ENCODE measurements at regions of chr9 and their contacts with region 1.

Region 1: DNA sequence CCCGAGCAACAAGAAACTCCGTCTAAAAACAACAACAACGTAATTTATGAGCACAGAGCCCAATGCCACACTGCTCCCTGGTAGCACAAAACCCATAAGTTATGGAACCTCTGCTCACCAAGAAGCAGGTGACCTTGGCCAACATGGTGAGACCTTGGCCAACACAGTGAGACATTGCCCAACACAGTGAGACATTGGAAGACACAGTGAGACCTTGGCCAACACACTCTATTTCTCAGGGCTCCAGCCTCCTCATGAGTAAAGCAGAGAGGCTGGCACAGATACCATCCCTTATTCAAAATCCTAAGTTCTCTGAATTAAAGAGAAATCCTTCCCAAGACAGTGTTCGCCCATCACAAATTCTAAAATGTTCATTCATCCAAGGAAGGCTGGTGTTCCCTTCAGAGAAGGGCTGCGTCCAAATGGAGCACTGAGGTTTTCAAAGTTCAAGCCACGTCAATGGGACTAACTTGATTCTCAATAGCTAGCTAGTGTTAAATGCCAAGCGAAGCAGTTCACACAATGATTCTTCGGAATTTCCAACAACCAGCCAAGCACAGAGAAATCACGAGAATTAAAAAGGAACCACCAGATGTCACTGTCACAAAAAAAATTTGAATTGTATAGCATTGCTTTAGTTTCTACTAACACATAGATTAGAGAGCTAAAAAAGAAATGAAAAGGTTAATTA is 29.5 kb downstream of the TTC39B start:
- DNase-seq: peak; percentile 15
- ATAC-seq: no peak
- H3K4me3 ChIP-seq: no peak overlapping the region
- H3K27ac ChIP-seq: no peak overlapping the region
- H3K4me1 ChIP-seq: peaks cover 71% of the 10 kb centered on the region
- H3K27me3 ChIP-seq: no peaks in the 10 kb centered on the region
- CTCF ChIP-seq: peak; percentile 40
- EP300 ChIP-seq: no peak
- POLR2A ChIP-seq: no peak
- RAD21 ChIP-seq: no peak

Region 2: GRCh38 chr9:14813336-14814180 is 464.0 kb before region 1 on chr9:
- CTCF ChIA-PET with region 1: no interaction called
- POLR2A ChIA-PET with region 1: no interaction called
- in situ Hi-C with region 1: no loop called
- intact Hi-C with region 1: no loop called
- DNase-seq: no peak
- ATAC-seq: no peak
- H3K4me3 ChIP-seq: no peak overlapping the region
- H3K27ac ChIP-seq: no peak overlapping the region
- H3K4me1 ChIP-seq: no peaks in the 10 kb centered on the region
- H3K27me3 ChIP-seq: no peaks in the 10 kb centered on the region
- CTCF ChIP-seq: no peak
- EP300 ChIP-seq: no peak
- POLR2A ChIP-seq: no peak
- RAD21 ChIP-seq: no peak

Region 3: DNA sequence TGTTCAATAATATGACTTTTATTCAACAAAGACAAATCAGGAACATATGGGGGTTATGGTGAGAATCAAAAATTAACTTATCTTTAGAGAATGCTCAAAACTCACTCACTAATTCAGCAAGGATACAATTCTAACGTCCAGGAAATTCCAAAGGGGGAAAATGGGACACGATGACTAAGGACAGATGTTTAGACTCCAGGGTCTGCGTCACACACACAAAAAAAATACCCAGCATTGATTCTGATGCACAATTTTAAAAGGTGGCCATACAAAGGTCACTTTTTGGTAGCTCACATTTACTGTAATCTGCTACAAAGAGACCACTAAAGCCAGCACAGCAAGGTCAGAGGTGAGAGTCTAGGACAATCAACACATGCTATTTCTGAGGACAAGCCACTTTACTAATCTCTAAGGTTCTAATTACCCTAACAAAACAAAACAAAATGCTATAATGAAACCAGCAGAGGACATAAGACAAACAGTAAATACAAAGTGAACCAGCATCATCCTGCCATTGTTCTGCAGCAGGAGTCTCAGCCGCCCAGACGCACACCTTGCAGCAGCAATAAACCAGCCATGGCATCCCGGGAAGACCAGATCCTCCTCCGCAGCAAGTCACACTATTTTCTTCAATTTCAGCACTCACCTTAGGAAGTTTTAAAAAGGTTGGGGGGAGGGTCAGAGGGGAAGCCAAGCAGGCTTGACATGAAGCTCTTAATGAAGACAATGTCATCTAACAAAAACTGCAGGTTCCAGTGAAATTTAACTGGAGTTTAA is 28.3 kb before region 1 on chr9:
- CTCF ChIA-PET with region 1: no interaction called
- POLR2A ChIA-PET with region 1: no interaction called
- in situ Hi-C with region 1: no loop called
- intact Hi-C with region 1: no loop called
- DNase-seq: no peak
- ATAC-seq: no peak
- H3K4me3 ChIP-seq: no peak overlapping the region
- H3K27ac ChIP-seq: no peak overlapping the region
- H3K4me1 ChIP-seq: peaks cover 40% of the 10 kb centered on the region
- H3K27me3 ChIP-seq: no peaks in the 10 kb centered on the region
- CTCF ChIP-seq: no peak
- EP300 ChIP-seq: no peak
- POLR2A ChIP-seq: no peak
- RAD21 ChIP-seq: no peak

Region 4: GRCh38 chr9:15333376-15333881 is 55.9 kb after region 1 on chr9:
- CTCF ChIA-PET with region 1: no interaction called
- POLR2A ChIA-PET with region 1: no interaction called
- in situ Hi-C with region 1: no loop called
- intact Hi-C with region 1: no loop called
- DNase-seq: peak; percentile 74
- ATAC-seq: peak; percentile 90
- H3K4me3 ChIP-seq: peak overlapping the region in 2 of 3 experiments; percentile 14 to 27; a peak in 2 of 6 replicates
- H3K27ac ChIP-seq: peak overlapping the region; percentile 62
- H3K4me1 ChIP-seq: peaks cover 64% of the 10 kb centered on the region
- H3K27me3 ChIP-seq: no peaks in the 10 kb centered on the region
- CTCF ChIP-seq: no peak
- EP300 ChIP-seq: peak in 1 of 2 experiments; percentile 85; a peak in 2 of 4 replicates
- POLR2A ChIP-seq: no peak
- RAD21 ChIP-seq: no peak

Region 5: DNA sequence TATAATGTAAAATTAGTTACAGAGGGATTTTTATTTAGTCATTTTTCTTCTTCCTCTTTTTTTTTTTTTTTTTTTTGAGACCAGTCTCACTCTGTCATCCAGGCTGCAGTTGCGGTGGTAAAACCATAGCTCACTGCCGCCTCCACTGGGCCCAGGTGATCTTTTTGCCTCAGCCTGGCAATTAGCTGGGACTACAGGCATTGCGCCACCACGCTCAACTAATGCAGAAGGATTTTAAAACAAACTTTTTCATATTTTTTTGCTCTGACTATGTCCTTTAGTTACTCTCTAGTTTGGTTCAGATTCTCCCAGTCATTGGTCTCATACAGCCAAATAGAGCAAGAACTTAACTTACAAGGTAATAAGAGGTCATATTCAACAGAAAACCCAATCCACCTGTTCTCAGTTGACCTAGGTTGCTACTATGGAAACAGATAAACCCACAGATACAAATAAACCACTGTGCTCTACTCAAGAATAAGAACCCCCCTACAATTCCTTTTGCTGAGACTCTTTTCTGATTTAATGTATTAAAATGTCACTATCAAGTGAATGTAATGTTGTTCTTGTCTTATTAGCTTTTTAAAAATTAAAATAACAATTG is 79.6 kb after region 1 on chr9:
- CTCF ChIA-PET with region 1: no interaction called
- POLR2A ChIA-PET with region 1: no interaction called
- in situ Hi-C with region 1: no loop called
- intact Hi-C with region 1: loop called (anchors 1 kb)
- DNase-seq: peak; percentile 60
- ATAC-seq: peak; percentile 97
- H3K4me3 ChIP-seq: no peak overlapping the region
- H3K27ac ChIP-seq: peak overlapping the region; percentile 42
- H3K4me1 ChIP-seq: peaks cover 64% of the 10 kb centered on the region
- H3K27me3 ChIP-seq: no peaks in the 10 kb centered on the region
- CTCF ChIP-seq: peak; percentile 68
- EP300 ChIP-seq: no peak
- POLR2A ChIP-seq: no peak
- RAD21 ChIP-seq: peak; percentile 59

Region 6: DNA sequence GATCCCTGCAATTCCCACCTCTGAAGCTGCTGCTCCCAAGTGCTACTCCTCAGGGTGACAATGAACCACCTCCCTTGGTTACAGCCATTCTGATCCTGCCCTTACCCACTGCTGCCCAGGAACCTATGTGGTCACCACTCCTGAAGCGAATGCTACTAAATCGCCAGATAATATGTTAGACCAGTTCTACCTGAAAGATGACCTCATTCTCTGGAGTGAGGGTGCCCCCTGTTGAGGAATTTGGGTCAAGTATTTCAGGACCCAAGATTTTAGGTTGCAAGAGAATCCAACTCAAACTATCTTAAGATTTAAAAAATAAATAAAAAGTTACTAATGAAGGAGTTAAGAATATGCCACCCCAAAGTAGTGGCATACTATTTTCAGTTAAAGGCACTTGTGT is 139.3 kb after region 1 on chr9:
- CTCF ChIA-PET with region 1: no interaction called
- POLR2A ChIA-PET with region 1: no interaction called
- in situ Hi-C with region 1: loop called (anchors 25 kb)
- intact Hi-C with region 1: loop called (anchors 2 kb)
- DNase-seq: peak; percentile 56
- ATAC-seq: peak; percentile 80
- H3K4me3 ChIP-seq: no peak overlapping the region
- H3K27ac ChIP-seq: no peak overlapping the region
- H3K4me1 ChIP-seq: peaks cover 22% of the 10 kb centered on the region
- H3K27me3 ChIP-seq: no peaks in the 10 kb centered on the region
- CTCF ChIP-seq: peak; percentile 78
- EP300 ChIP-seq: no peak
- POLR2A ChIP-seq: no peak
- RAD21 ChIP-seq: peak; percentile 48; the same call in 1 of the 2 replicates

Region 7: DNA sequence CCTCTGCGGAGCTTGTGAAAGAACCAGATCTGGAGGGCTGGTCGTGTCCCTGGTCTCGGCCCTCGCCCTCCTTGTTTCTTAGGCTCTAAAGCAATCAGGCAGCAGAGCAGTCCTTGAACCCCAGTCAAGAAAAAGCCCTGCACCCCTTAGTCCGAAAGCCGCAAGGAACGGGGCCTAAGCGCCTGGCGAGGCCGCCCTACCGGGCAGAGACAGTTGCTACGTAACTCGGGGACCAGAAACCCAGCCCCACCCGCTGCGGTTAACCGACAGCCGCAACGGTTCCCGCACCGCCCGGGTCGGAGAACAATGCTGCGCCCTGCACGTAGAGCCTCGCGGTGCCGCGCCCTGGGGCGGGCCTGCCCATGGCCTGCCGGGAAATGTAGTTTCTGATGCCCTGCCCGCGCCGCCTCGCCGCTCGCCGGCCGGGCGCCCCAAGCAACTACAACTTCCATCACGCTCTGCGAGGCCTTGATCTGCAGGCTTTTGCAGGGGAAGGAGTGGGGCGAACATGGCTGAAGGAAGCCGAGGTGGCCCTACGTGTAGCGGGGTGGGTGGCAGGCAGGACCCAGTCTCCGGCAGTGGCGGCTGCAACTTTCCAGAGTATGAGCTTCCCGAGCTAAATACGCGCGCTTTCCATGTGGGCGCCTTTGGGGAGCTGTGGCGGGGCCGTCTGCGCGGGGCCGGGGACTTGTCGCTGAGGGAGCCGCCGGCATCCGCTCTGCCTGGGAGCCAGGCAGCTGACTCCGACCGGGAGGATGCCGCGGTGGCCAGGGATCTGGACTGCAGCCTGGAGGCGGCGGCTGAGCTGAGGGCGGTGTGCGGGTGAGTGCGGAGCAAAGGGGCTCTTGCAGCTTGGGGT is 145.1 kb after region 1 on chr9 and contains the start of gene SNAPC3:
- CTCF ChIA-PET with region 1: no interaction called
- POLR2A ChIA-PET with region 1: no interaction called
- in situ Hi-C with region 1: loop called (anchors 25 kb)
- intact Hi-C with region 1: loop called (anchors 2 kb)
- DNase-seq: peak; percentile 88
- ATAC-seq: peak; percentile 98
- H3K4me3 ChIP-seq: peak within 1 kb of the TSS; percentile 77 to 94 (median 91)
- H3K27ac ChIP-seq: peak within 1 kb of the TSS; percentile 75
- H3K4me1 ChIP-seq: peaks cover 48% of the 10 kb centered on the region
- H3K27me3 ChIP-seq: no peaks in the 10 kb centered on the region; a peak in 1 of 5 replicates
- CTCF ChIP-seq: 0 out of 2 replicates have a peak, but pooled peaks have one; percentile 1
- EP300 ChIP-seq: no peak
- POLR2A ChIP-seq: peak; percentile 81 to 91
- RAD21 ChIP-seq: no peak; the same call in 1 of the 2 replicates
- total RNA-seq, gene SNAPC3: 25.5 and 25.6 TPM in 2 replicates